ENCODE measurements at regions of chr16 and their contacts with region 1.

Region 1: GRCh38 chr16:82738699-82739098 is 111.9 kb downstream of the CDH13 start:
- DNase-seq: no peak
- ATAC-seq: no peak

Region 2: GRCh38 chr16:82626791-82627261 is 111.9 kb before region 1 on chr16 and contains the start of gene CDH13:
- intact Hi-C with region 1: loop called (anchors 5 kb)
- DNase-seq: peak; percentile 70
- ATAC-seq: peak; percentile 60
- total RNA-seq, gene CDH13: 166 TPM